Sigmoid colon (tissue), 7 donors: ENCODE measurements at regions of chr19 and their contacts with region 1.

Region 1: GRCh38 chr19:9435279-9436268 is at the start of gene ZNF266:
- DNase-seq: peak; percentile 94
- H3K4me3 ChIP-seq: peak within 1 kb of the TSS; percentile 67 to 83 (median 68)
- H3K27ac ChIP-seq: peak within 1 kb of the TSS; percentile 83 to 92 (median 86)
- H3K4me1 ChIP-seq: peaks cover 0 to 19% (median 18%) of the 10 kb centered on the region in 4 donors
- H3K27me3 ChIP-seq: no peaks in the 10 kb centered on the region
- CTCF ChIP-seq: peak; percentile 84 to 93 (median 86)
- EP300 ChIP-seq: no peak
- POLR2A ChIP-seq: peak in 1 of 2 donors; percentile 21
- total RNA-seq, gene ZNF266: 15.7 to 32.7 (median 21.6) TPM

Region 2: GRCh38 chr19:9309139-9309973 is 126.2 kb before region 1 on chr19 and contains the start of gene ZNF699:
- intact Hi-C with region 1: loop called (anchors 5 kb)
- DNase-seq: peak; percentile 99
- H3K4me3 ChIP-seq: peak within 1 kb of the TSS; percentile 68 to 94 (median 84)
- H3K27ac ChIP-seq: peak within 1 kb of the TSS; percentile 91 to 98 (median 96)
- H3K4me1 ChIP-seq: peaks cover 0 to 21% (median 13%) of the 10 kb centered on the region in 4 donors
- H3K27me3 ChIP-seq: no peaks in the 10 kb centered on the region
- CTCF ChIP-seq: no peak
- EP300 ChIP-seq: peak in 1 of 4 donors; percentile 4
- POLR2A ChIP-seq: peak; percentile 33 to 63
- total RNA-seq, gene ZNF699: 3.1 to 23.7 (median 11.9) TPM

Region 3: GRCh38 chr19:9323919-9324583 is 111.5 kb before region 1 on chr19 and contains the start of gene ZNF559:
- intact Hi-C with region 1: loop called (anchors 1 kb)
- DNase-seq: peak; percentile 97
- H3K4me3 ChIP-seq: peak within 1 kb of the TSS; percentile 70 to 83 (median 76)
- H3K27ac ChIP-seq: peak within 1 kb of the TSS; percentile 88 to 94 (median 92)
- H3K4me1 ChIP-seq: peaks cover 0 to 7% (median 7%) of the 10 kb centered on the region in 4 donors
- H3K27me3 ChIP-seq: no peaks in the 10 kb centered on the region
- CTCF ChIP-seq: no peak
- EP300 ChIP-seq: no peak
- POLR2A ChIP-seq: peak in 1 of 2 donors; percentile 27
- total RNA-seq, gene ZNF559: 16.5 to 45.7 (median 23.9) TPM

Region 4: GRCh38 chr19:9538183-9539058 is 102.8 kb after region 1 on chr19 and contains the start of gene ZNF426:
- intact Hi-C with region 1: loop called (anchors 5 kb)
- DNase-seq: peak; percentile 93
- H3K4me3 ChIP-seq: peak within 1 kb of the TSS; percentile 54 to 76 (median 72)
- H3K27ac ChIP-seq: peak within 1 kb of the TSS; percentile 91 to 95 (median 92)
- H3K4me1 ChIP-seq: peaks cover 0 to 18% (median 10%) of the 10 kb centered on the region in 4 donors
- H3K27me3 ChIP-seq: no peaks in the 10 kb centered on the region
- CTCF ChIP-seq: no peak
- EP300 ChIP-seq: no peak
- POLR2A ChIP-seq: peak in 1 of 2 donors; percentile 5
- total RNA-seq, gene ZNF426: 11.4 to 18.1 (median 12.7) TPM

Region 5: DNA sequence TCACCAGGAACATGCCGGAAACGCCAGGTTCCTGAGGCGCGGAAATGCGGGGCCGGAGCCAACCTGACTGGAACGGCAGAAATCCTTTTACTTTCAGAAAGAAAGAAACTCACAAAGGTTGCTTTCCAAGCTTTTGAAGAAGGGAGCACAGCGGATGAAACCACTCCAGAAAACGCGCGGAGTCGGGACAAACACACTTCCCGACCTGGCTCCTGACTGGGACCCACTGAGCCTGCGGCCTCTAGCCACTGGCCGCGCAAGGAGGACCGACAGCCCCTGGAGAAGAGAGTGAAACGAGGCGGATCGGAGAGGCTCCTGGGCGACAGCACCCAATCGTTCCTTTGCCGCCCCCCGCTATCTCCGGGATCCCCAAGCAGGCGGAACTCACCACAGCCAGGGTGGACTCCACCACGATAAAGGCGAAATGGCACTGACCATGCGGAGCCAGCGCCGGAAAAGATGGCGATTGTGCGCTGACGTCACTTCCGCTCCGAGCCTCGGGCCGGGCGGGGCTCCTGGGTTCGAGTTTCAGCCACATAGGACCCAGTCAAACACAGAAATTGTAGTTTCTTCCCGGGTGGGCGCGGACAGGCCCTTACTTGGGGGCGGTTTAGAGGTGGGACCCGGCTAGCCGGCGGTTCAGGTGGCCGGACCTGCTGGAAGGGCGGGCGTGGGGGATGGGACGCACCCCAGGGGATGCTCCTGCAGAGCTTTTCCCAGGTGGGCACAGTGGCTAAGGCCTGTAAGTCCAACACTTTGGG is 148.7 kb after region 1 on chr19 and contains the start of gene ZNF121:
- intact Hi-C with region 1: loop called (anchors 5 kb)
- DNase-seq: peak; percentile 89
- H3K4me3 ChIP-seq: peak within 1 kb of the TSS; percentile 68 to 76 (median 70)
- H3K27ac ChIP-seq: peak within 1 kb of the TSS; percentile 88 to 92 (median 90)
- H3K4me1 ChIP-seq: peaks cover 0 to 22% (median 17%) of the 10 kb centered on the region in 4 donors
- H3K27me3 ChIP-seq: peaks cover 0 to 5% (median 0%) of the 10 kb centered on the region in 3 donors
- CTCF ChIP-seq: no peak
- EP300 ChIP-seq: no peak
- POLR2A ChIP-seq: peak in 1 of 2 donors; percentile 34
- total RNA-seq, gene ZNF121: 18.3 to 28.6 (median 23.7) TPM

Region 6: GRCh38 chr19:9818734-9819589 is 383.4 kb after region 1 on chr19 and contains the start of gene FBXL12:
- intact Hi-C with region 1: loop called (anchors 10 kb)
- DNase-seq: peak; percentile 100
- H3K4me3 ChIP-seq: peak within 1 kb of the TSS; percentile 59 to 90 (median 86)
- H3K27ac ChIP-seq: peak within 1 kb of the TSS; percentile 86 to 94 (median 92)
- H3K4me1 ChIP-seq: peaks cover 0 to 27% (median 19%) of the 10 kb centered on the region in 4 donors
- H3K27me3 ChIP-seq: no peaks in the 10 kb centered on the region
- CTCF ChIP-seq: no peak
- EP300 ChIP-seq: no peak
- POLR2A ChIP-seq: peak; percentile 78 to 89
- total RNA-seq, gene FBXL12: 18.3 to 31.9 (median 26.6) TPM